ENCODE measurements at regions of chr2 and their contacts with region 1.

Region 1: GRCh38 chr2:134453973-134454372 is 200.1 kb downstream of the MGAT5 start:
- DNase-seq: no peak
- ATAC-seq: no peak
- H3K4me3 ChIP-seq: no peak overlapping the region
- H3K4me3 Mint-ChIP-seq: no peak overlapping the region
- H3K27ac ChIP-seq: no peak overlapping the region
- H3K27ac Mint-ChIP-seq: no peak overlapping the region
- H3K4me1 ChIP-seq: no peaks in the 10 kb centered on the region
- H3K4me1 Mint-ChIP-seq: no peaks in the 10 kb centered on the region
- H3K27me3 ChIP-seq: no peaks in the 10 kb centered on the region
- H3K27me3 Mint-ChIP-seq: no peaks in the 10 kb centered on the region
- CTCF ChIP-seq: no peak

Region 2: DNA sequence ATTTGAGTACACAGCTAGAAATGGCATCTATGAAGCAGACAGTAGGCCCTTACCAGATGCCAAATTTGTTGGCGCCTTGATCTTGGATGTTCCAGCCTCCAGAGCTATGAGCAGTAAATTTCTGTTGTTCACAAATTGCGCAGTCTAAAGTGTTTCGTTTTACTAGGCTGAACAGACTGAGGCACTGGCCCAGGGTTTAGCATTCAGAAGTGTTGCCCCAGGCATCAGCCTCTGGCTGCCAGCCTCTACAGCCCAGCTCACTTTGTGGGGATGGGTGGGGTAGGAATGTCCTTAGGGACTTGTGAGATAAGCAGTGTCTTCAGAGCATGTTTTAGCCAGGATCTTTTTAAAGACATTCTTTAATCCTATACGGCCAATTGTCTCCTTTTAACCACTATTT is 251.6 kb before region 1 on chr2:
- CTCF ChIA-PET with region 1: no interaction called
- POLR2A ChIA-PET with region 1: no interaction called
- intact Hi-C with region 1: no loop called
- DNase-seq: no peak
- ATAC-seq: no peak
- H3K4me3 ChIP-seq: no peak overlapping the region
- H3K4me3 Mint-ChIP-seq: no peak overlapping the region
- H3K27ac ChIP-seq: peak overlapping the region in 1 of 2 donors; percentile 4
- H3K27ac Mint-ChIP-seq: peak overlapping the region; percentile 32
- H3K4me1 ChIP-seq: peaks cover 52 to 66% of the 10 kb centered on the region in 2 donors
- H3K4me1 Mint-ChIP-seq: peaks cover 49% of the 10 kb centered on the region
- H3K27me3 ChIP-seq: no peaks in the 10 kb centered on the region
- H3K27me3 Mint-ChIP-seq: no peaks in the 10 kb centered on the region
- CTCF ChIP-seq: no peak

Region 3: DNA sequence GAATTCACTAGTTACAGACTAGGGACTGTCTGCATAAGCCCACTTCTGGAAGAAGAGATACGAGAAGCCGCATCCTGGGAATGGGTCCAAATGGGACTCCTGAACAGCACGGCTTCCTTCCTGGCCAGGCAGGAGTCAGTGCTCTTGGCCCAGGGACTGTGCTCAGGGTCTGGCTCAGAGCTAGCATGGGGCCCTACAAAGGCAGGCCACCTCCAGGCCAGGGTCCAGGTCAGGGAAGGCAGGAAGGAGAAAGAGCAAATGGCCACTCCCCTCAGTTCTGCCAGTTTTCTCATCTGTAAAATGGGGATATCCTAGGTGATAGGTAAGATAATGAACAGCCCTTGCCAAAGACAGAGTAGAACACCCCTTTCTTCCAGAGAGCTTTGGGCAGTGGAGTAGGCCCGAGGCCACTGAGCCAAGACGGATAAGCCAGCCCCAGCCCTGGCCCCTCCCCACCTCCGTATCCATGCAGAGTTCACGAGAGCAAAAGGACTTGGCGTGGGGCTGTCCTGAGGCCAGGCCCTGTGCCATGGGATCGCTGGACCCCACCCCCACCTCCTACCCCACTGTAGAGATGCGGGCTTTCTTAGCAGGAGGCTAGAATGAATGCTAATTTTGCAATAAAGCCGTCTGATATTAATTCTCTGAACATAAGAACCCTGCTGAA is 10.0 kb before region 1 on chr2:
- CTCF ChIA-PET with region 1: interaction called, 21 read pairs
- POLR2A ChIA-PET with region 1: no interaction called
- intact Hi-C with region 1: no loop called
- DNase-seq: no peak
- ATAC-seq: no peak
- H3K4me3 ChIP-seq: no peak overlapping the region
- H3K4me3 Mint-ChIP-seq: no peak overlapping the region
- H3K27ac ChIP-seq: no peak overlapping the region
- H3K27ac Mint-ChIP-seq: no peak overlapping the region
- H3K4me1 ChIP-seq: no peaks in the 10 kb centered on the region
- H3K4me1 Mint-ChIP-seq: no peaks in the 10 kb centered on the region
- H3K27me3 ChIP-seq: no peaks in the 10 kb centered on the region
- H3K27me3 Mint-ChIP-seq: no peaks in the 10 kb centered on the region
- CTCF ChIP-seq: no peak

Measured in B cell (primary cell).